ENCODE measurements at regions of chr19 and their contacts with region 1.

Region 1: DNA sequence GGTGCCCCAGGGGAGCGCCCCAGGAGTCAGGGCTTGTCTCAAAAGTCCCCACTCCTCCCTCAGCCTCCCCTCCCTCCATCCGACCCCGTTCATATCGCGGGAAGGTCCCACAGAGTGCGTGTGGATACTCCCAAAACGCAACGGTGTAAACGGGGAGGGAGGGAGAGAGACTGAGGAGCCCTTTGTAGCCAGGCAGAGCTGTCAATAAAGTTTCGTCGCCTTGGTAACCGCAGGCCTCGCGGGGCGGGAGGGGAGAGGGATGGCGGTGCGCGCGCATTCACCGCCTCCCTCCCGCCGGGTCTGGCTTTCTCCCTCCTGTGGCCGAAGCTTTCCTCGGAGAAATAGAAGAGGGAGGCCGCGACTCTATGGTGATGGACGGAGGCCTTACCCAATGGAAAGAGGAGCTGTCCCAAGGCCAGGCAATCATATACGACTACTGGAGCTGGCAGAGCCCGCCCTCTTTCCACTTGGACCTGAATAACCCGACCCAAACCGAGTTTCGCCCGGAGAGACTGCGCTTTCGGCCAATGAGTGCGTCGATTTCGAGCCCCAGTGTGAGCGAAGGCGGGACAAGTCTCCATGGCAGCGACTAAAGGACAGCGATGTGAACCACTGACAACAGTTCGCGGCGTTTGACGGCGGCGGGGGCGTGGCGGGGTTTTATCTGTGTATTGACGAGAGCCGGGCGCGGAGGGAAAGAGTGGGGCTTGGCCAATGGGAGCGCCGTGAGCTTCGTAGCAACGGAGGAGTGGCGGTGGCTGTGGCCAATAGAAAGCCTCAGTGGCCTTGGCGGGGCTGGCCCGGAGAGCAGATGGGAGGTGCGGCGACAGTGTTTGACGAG is at the start of gene KMT5C:
- DNase-seq: peak; percentile 100
- H3K4me3 Mint-ChIP-seq: peak within 1 kb of the TSS; percentile 96
- H3K27ac Mint-ChIP-seq: peak within 1 kb of the TSS; percentile 99
- H3K4me1 Mint-ChIP-seq: peaks cover 14% of the 10 kb centered on the region
- H3K27me3 Mint-ChIP-seq: peaks cover 9% of the 10 kb centered on the region
- total RNA-seq, gene KMT5C: 29.1 and 29.9 TPM in 2 replicates

Region 2: GRCh38 chr19:54448774-54449700 is 890.2 kb before region 1 on chr19 and contains the start of gene LENG8:
- intact Hi-C with region 1: loop called (anchors 2 kb)
- DNase-seq: peak; percentile 96
- H3K4me3 Mint-ChIP-seq: peak within 1 kb of the TSS; percentile 99
- H3K27ac Mint-ChIP-seq: peak within 1 kb of the TSS; percentile 98
- H3K4me1 Mint-ChIP-seq: peaks cover 36% of the 10 kb centered on the region
- H3K27me3 Mint-ChIP-seq: no peaks in the 10 kb centered on the region
- total RNA-seq, gene LENG8: 192 and 193 TPM in 2 replicates

Region 3: GRCh38 chr19:55178781-55179599 is 160.3 kb before region 1 on chr19:
- intact Hi-C with region 1: loop called (anchors 1 kb)
- DNase-seq: peak; percentile 90
- H3K4me3 Mint-ChIP-seq: peak overlapping the region; percentile 64
- H3K27ac Mint-ChIP-seq: peak overlapping the region; percentile 34
- H3K4me1 Mint-ChIP-seq: peaks cover 11% of the 10 kb centered on the region
- H3K27me3 Mint-ChIP-seq: peaks cover 36% of the 10 kb centered on the region

Region 4: DNA sequence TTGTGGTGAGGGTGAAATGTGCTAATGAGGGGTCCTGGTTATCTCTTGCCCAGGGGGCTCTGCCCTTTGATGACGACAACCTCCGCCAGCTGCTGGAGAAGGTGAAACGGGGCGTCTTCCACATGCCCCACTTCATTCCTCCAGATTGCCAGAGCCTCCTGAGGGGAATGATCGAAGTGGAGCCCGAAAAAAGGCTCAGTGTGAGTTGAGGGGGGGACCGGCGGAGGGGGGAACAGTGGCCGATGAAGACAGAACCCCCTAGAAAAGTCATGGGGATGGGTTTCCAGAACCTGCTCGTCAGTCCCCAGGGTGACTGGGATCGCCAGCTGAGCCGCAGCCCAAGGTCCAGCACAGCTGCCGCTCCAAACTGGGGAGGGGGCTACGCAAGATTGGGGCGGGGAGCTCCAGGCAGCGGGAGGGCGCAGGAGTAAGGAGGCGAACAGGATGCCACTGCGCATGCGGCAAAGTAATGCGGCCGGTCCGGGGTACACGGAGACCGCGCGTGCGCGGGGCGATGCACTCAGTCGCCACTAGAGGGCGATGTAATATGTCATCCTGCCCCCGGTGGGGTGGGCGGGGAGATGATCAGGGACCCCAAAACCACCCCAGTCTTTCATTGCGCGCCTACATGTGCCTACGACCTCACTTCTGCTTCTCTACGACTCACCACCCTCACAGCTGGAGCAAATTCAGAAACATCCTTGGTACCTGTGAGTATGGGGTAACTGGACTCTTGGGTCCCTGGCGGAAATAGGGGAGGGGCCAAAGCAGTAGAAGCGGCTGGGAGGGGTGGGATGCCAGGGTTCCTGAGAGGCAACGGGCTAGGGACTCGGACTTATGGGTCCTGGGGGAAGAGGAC is 37.6 kb before region 1 on chr19:
- intact Hi-C with region 1: loop called (anchors 1 kb)
- DNase-seq: peak; percentile 91
- H3K4me3 Mint-ChIP-seq: peak overlapping the region; percentile 88
- H3K27ac Mint-ChIP-seq: peak overlapping the region; percentile 88
- H3K4me1 Mint-ChIP-seq: peaks cover 17% of the 10 kb centered on the region
- H3K27me3 Mint-ChIP-seq: no peaks in the 10 kb centered on the region

Region 5: GRCh38 chr19:55392820-55393761 is 53.8 kb after region 1 on chr19:
- intact Hi-C with region 1: no loop called
- DNase-seq: no peak
- H3K4me3 Mint-ChIP-seq: no peak overlapping the region
- H3K27ac Mint-ChIP-seq: no peak overlapping the region
- H3K4me1 Mint-ChIP-seq: peaks cover 27% of the 10 kb centered on the region
- H3K27me3 Mint-ChIP-seq: no peaks in the 10 kb centered on the region

Region 6: DNA sequence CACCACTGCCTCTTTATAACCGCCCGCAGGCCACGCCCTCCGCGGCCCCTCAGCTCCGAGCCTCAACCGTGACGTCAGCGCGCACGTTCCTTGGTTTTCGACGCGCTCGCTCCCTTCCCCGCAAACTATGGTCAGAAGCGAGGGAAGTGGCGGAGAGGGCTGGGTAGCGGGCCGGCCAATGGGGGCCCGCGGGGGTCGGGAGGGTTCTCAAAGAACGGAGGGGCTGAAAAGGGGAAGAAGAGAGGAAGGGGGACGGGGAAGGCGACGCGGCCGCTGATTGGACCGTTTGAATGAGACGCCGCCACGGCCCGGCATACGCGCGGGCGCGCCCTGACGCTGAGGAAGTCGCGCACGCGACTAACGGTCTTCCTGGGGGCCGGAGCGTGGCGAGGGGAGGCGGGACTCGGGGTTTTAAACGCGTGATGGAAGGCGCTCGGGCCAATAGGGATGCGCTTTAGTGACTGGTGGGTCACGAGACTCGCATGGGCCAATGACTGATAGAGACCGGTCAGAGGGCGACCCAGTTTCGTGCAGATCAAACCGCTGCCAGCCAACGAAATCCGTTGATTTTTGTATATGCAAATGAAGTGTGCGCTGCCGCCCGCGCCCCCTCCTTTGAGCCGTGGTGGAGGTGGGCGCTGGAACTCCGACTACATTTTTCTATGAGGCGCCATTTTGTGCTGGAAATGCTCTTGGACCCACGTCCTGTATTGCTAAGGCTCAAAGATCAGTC is 68.7 kb after region 1 on chr19:
- intact Hi-C with region 1: loop called (anchors 1 kb)
- DNase-seq: peak; percentile 96
- H3K4me3 Mint-ChIP-seq: peak overlapping the region; percentile 93
- H3K27ac Mint-ChIP-seq: peak overlapping the region; percentile 97
- H3K4me1 Mint-ChIP-seq: peaks cover 26% of the 10 kb centered on the region
- H3K27me3 Mint-ChIP-seq: peaks cover 6% of the 10 kb centered on the region

Region 7: DNA sequence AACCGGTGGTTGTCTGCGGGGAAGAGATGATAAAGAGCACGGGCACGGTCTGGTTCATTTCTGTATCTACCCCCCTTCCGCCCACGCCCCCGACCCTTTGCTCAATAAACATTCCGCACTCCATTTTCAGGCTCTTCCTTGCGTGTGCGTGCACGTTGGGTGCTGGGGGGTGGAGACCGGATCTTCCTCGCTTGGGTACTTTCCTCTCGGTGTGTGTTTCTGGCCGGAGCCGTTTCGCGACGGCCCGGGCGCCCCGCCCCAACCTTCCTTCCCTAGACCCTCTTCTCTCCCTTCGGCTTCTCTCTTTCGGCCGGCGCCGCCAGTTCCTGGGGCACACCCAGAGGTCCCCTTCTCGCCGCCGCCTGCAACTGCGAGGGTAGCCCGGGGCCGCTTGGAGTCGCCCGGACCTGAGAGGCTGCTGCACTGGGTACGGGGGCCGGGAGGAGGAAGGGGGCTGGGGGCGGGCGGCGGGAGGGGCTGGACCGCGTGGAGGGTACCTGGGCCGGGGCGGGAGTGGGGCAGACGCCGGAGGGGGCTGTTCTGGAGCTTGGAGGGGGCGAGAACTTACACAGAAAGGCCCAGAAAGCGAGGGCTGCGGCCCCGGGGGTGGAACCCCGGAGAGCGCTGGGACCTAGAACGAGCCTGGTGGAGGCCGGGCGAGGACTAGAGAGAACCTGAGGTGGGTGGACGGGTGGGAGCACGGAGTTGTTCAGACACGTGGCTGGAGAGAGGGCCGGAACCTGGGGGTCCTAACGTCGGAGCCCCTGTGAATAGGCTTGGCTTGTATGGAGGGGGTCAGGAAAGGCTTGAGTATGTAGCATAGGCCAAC is 304.3 kb after region 1 on chr19 and contains the start of gene ZNF581:
- intact Hi-C with region 1: loop called (anchors 5 kb)
- DNase-seq: peak; percentile 77
- H3K4me3 Mint-ChIP-seq: peak within 1 kb of the TSS; percentile 100
- H3K27ac Mint-ChIP-seq: peak within 1 kb of the TSS; percentile 99
- H3K4me1 Mint-ChIP-seq: peaks cover 43% of the 10 kb centered on the region
- H3K27me3 Mint-ChIP-seq: no peaks in the 10 kb centered on the region
- total RNA-seq, gene ZNF581: 35.6 and 36.4 TPM in 2 replicates